Natural killer cell (primary cell): ENCODE measurements at regions of chr3 and their contacts with region 1.

Region 1: GRCh38 chr3:143241481-143241951 is 121.9 kb downstream of the CHST2 start:
- DNase-seq: no peak
- ATAC-seq: no peak
- H3K4me3 ChIP-seq: no peak overlapping the region
- H3K4me3 Mint-ChIP-seq: peak overlapping the region; percentile 60
- H3K27ac ChIP-seq: peak overlapping the region; percentile 34
- H3K27ac Mint-ChIP-seq: peak overlapping the region; percentile 85 to 88
- H3K4me1 ChIP-seq: peaks cover 28% of the 10 kb centered on the region
- H3K4me1 Mint-ChIP-seq: peaks cover 70 to 79% of the 10 kb centered on the region in 2 donors
- H3K27me3 ChIP-seq: no peaks in the 10 kb centered on the region
- H3K27me3 Mint-ChIP-seq: no peaks in the 10 kb centered on the region
- CTCF ChIP-seq: no peak

Region 2: DNA sequence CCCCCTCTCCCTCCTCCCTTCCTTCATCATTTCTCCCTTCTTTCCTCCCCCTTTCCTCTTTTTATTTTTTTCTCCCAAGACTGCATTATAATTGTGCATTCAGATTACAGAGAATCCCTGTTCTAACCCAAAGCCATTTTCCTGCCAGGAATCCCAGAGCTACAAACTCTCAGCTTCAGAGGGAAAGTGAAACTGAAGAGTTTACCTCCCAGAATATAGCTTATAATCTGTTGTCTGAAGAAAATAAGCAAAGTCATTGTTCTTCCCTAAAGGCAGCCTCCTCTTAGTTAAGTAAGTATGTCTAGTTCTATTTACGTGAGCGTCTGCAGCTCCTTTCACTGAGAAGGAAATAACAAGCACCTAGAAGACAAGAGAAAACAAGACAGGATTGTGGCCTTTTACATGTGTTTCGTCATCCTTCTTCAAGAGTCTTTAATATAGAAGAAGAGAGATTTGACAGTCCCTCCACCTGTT is 24.8 kb before region 1 on chr3:
- intact Hi-C with region 1: no loop called
- DNase-seq: peak in 1 of 2 donors; percentile 33
- ATAC-seq: peak in 2 of 3 donors; percentile 49 to 55
- H3K4me3 ChIP-seq: no peak overlapping the region
- H3K4me3 Mint-ChIP-seq: peak overlapping the region; percentile 82
- H3K27ac ChIP-seq: peak overlapping the region; percentile 34
- H3K27ac Mint-ChIP-seq: peak overlapping the region; percentile 67 to 90
- H3K4me1 ChIP-seq: peaks cover 7% of the 10 kb centered on the region
- H3K4me1 Mint-ChIP-seq: peaks cover 34 to 39% of the 10 kb centered on the region in 2 donors
- H3K27me3 ChIP-seq: no peaks in the 10 kb centered on the region
- H3K27me3 Mint-ChIP-seq: no peaks in the 10 kb centered on the region
- CTCF ChIP-seq: no peak

Region 3: DNA sequence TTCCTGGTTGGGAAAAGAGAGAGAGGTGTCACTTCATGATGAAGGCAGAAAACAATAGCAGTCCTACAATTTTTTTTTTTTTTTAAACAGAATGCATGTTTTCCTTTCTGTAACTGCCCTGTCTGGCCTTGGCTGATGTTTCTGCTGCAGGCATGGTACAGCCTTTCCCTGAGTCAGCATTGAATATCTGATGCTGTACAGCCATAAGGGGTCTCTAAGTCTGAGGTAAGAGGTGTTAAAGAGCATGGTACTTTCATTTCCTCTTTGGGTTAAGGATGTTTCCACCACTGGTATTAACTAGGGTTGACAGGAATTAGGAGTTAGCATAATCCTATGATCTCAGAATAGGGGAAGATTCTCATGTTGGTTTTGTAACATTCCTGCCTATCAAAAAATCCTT is 25.4 kb after region 1 on chr3:
- intact Hi-C with region 1: no loop called
- DNase-seq: no peak
- ATAC-seq: peak in 2 of 3 donors; percentile 63 to 78
- H3K4me3 ChIP-seq: no peak overlapping the region
- H3K4me3 Mint-ChIP-seq: peak overlapping the region; percentile 59
- H3K27ac ChIP-seq: no peak overlapping the region
- H3K27ac Mint-ChIP-seq: peak overlapping the region; percentile 68 to 73
- H3K4me1 ChIP-seq: peaks cover 24% of the 10 kb centered on the region
- H3K4me1 Mint-ChIP-seq: peaks cover 44 to 65% of the 10 kb centered on the region in 2 donors
- H3K27me3 ChIP-seq: no peaks in the 10 kb centered on the region
- H3K27me3 Mint-ChIP-seq: no peaks in the 10 kb centered on the region
- CTCF ChIP-seq: no peak

Region 4: GRCh38 chr3:143294188-143294587 is 52.7 kb after region 1 on chr3:
- intact Hi-C with region 1: no loop called
- DNase-seq: no peak
- ATAC-seq: peak; percentile 77 to 96 (median 86)
- H3K4me3 ChIP-seq: no peak overlapping the region
- H3K4me3 Mint-ChIP-seq: peak overlapping the region; percentile 65
- H3K27ac ChIP-seq: peak overlapping the region; percentile 70
- H3K27ac Mint-ChIP-seq: peak overlapping the region; percentile 71 to 72
- H3K4me1 ChIP-seq: peaks cover 21% of the 10 kb centered on the region
- H3K4me1 Mint-ChIP-seq: peaks cover 76 to 80% of the 10 kb centered on the region in 2 donors
- H3K27me3 ChIP-seq: no peaks in the 10 kb centered on the region
- H3K27me3 Mint-ChIP-seq: no peaks in the 10 kb centered on the region
- CTCF ChIP-seq: no peak

Region 5: GRCh38 chr3:143337387-143337786 is 95.9 kb after region 1 on chr3:
- intact Hi-C with region 1: no loop called
- DNase-seq: no peak
- ATAC-seq: no peak
- H3K4me3 ChIP-seq: no peak overlapping the region
- H3K4me3 Mint-ChIP-seq: no peak overlapping the region
- H3K27ac ChIP-seq: no peak overlapping the region
- H3K27ac Mint-ChIP-seq: no peak overlapping the region
- H3K4me1 ChIP-seq: no peaks in the 10 kb centered on the region
- H3K4me1 Mint-ChIP-seq: peaks cover 12 to 17% of the 10 kb centered on the region in 2 donors
- H3K27me3 ChIP-seq: no peaks in the 10 kb centered on the region
- H3K27me3 Mint-ChIP-seq: no peaks in the 10 kb centered on the region
- CTCF ChIP-seq: no peak

Region 6: GRCh38 chr3:143443851-143444331 is 202.4 kb after region 1 on chr3:
- intact Hi-C with region 1: loop called (anchors 10 kb)
- DNase-seq: peak in 1 of 2 donors; percentile 29
- ATAC-seq: peak; percentile 30 to 48 (median 47)
- H3K4me3 ChIP-seq: no peak overlapping the region
- H3K4me3 Mint-ChIP-seq: no peak overlapping the region
- H3K27ac ChIP-seq: no peak overlapping the region
- H3K27ac Mint-ChIP-seq: peak overlapping the region in 1 of 2 donors; percentile 70
- H3K4me1 ChIP-seq: peaks cover 8% of the 10 kb centered on the region
- H3K4me1 Mint-ChIP-seq: peaks cover 32 to 46% of the 10 kb centered on the region in 2 donors
- H3K27me3 ChIP-seq: no peaks in the 10 kb centered on the region
- H3K27me3 Mint-ChIP-seq: no peaks in the 10 kb centered on the region
- CTCF ChIP-seq: no peak